HEK293 (cell line): ENCODE measurements at regions of chr17 and their contacts with region 1.

Region 1: GRCh38 chr17:48215583-48216139 is 108.1 kb downstream of the SNX11 start:
- H3K4me3 ChIP-seq: no peak overlapping the region
- H3K27ac ChIP-seq: no peak overlapping the region
- H3K4me1 ChIP-seq: peaks cover 6% of the 10 kb centered on the region
- CTCF ChIP-seq: peak; percentile 75

Region 2: GRCh38 chr17:48060249-48060648 is 155.4 kb before region 1 on chr17:
- CTCF ChIA-PET with region 1: no interaction called
- POLR2A ChIA-PET with region 1: no interaction called
- H3K4me3 ChIP-seq: no peak overlapping the region
- H3K27ac ChIP-seq: no peak overlapping the region
- H3K4me1 ChIP-seq: peaks cover 3% of the 10 kb centered on the region; the same call in 1 of the 2 replicates
- CTCF ChIP-seq: no peak

Region 3: DNA sequence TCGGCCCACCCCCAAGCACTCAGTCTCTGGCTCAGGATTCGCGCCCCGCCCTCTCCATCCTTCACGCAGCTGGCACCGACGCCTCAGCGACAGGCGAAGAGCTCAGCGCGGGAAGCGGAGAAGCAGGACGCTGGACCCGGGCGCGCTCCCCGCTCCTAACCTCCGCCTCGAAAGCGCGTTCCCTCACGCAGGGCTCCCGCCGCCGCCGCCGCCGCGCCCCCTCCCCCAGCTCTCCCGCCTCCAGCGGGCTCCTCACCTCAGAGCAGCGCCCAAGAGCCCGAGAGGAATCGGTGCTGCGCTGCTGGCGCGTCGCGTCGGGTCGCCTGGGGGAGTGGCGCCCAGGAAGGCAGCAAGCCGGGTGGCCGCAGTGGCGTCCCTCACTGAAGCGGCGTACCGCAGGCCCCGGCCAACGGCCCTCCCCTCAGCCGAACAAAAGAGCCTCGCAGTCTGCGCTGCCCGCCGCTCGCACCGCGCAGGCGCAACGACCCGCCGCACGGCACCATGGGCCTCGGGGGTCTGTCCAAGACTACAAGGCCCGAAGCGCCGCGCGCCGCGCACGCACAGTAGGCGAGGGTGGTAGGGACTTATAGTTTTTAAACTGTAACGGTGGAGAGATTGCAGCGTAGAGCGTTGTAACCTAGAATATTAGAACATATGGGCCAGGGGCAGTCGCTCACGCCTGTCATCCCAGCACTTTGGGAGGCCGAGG is 114.5 kb before region 1 on chr17 and contains the start of gene CBX1:
- CTCF ChIA-PET with region 1: no interaction called
- POLR2A ChIA-PET with region 1: no interaction called
- H3K4me3 ChIP-seq: peak within 1 kb of the TSS; percentile 85
- H3K27ac ChIP-seq: peak within 1 kb of the TSS; percentile 97
- H3K4me1 ChIP-seq: peaks cover 4% of the 10 kb centered on the region; the same call in 1 of the 2 replicates
- CTCF ChIP-seq: no peak

Region 4: GRCh38 chr17:48162946-48163506 is 52.6 kb before region 1 on chr17:
- CTCF ChIA-PET with region 1: interaction called, 11 read pairs
- POLR2A ChIA-PET with region 1: interaction called, 3 read pairs
- H3K4me3 ChIP-seq: no peak overlapping the region
- H3K27ac ChIP-seq: peak overlapping the region; percentile 56
- H3K4me1 ChIP-seq: peaks cover 36% of the 10 kb centered on the region
- CTCF ChIP-seq: no peak

Region 5: GRCh38 chr17:48202959-48203358 is 12.7 kb before region 1 on chr17:
- CTCF ChIA-PET with region 1: interaction called, 13 read pairs
- POLR2A ChIA-PET with region 1: no interaction called
- H3K4me3 ChIP-seq: no peak overlapping the region
- H3K27ac ChIP-seq: no peak overlapping the region
- H3K4me1 ChIP-seq: peaks cover 9% of the 10 kb centered on the region; the same call in 1 of the 2 replicates
- CTCF ChIP-seq: no peak

Region 6: GRCh38 chr17:48259694-48260291 is 44.1 kb after region 1 on chr17:
- CTCF ChIA-PET with region 1: interaction called, 221 read pairs
- POLR2A ChIA-PET with region 1: no interaction called
- H3K4me3 ChIP-seq: no peak overlapping the region
- H3K27ac ChIP-seq: no peak overlapping the region
- H3K4me1 ChIP-seq: peaks cover 6% of the 10 kb centered on the region
- CTCF ChIP-seq: peak; percentile 85

Region 7: GRCh38 chr17:48335858-48336500 is 120.3 kb after region 1 on chr17:
- CTCF ChIA-PET with region 1: interaction called, 44 read pairs
- POLR2A ChIA-PET with region 1: no interaction called
- H3K4me3 ChIP-seq: no peak overlapping the region
- H3K27ac ChIP-seq: no peak overlapping the region
- H3K4me1 ChIP-seq: peaks cover 15% of the 10 kb centered on the region; the same call in 1 of the 2 replicates
- CTCF ChIP-seq: no peak

Region 8: GRCh38 chr17:48618256-48618897 is 402.7 kb after region 1 on chr17:
- CTCF ChIA-PET with region 1: interaction called, 29 read pairs
- POLR2A ChIA-PET with region 1: no interaction called
- H3K4me3 ChIP-seq: no peak overlapping the region
- H3K27ac ChIP-seq: peak overlapping the region; percentile 44; the same call in 1 of the 2 replicates
- H3K4me1 ChIP-seq: peaks cover 48% of the 10 kb centered on the region
- CTCF ChIP-seq: peak; percentile 96